Transverse colon (tissue), 4 donors: ENCODE measurements at regions of chr10 and their contacts with region 1.

Region 1: GRCh38 chr10:17200912-17201793 is at the start of gene TRDMT1:
- DNase-seq: peak; percentile 88
- H3K4me3 ChIP-seq: peak within 1 kb of the TSS; percentile 62 to 90 (median 72)
- H3K27ac ChIP-seq: peak within 1 kb of the TSS; percentile 90 to 95 (median 94)
- H3K4me1 ChIP-seq: peaks cover 0 to 24% (median 10%) of the 10 kb centered on the region in 4 donors
- H3K27me3 ChIP-seq: no peaks in the 10 kb centered on the region
- CTCF ChIP-seq: no peak
- EP300 ChIP-seq: no peak
- POLR2A ChIP-seq: peak; percentile 55
- total RNA-seq, gene TRDMT1: 3.7 to 9.7 (median 7.9) TPM

Region 2: GRCh38 chr10:17228091-17228940 is 27.2 kb after region 1 on chr10 and contains the start of gene VIM:
- in situ Hi-C with region 1: no loop called
- intact Hi-C with region 1: loop called (anchors 2 kb)
- DNase-seq: peak; percentile 81
- H3K4me3 ChIP-seq: peak within 1 kb of the TSS; percentile 54 to 69 (median 58)
- H3K27ac ChIP-seq: peak within 1 kb of the TSS; percentile 92 to 99 (median 96)
- H3K4me1 ChIP-seq: peaks cover 10 to 60% (median 33%) of the 10 kb centered on the region in 4 donors
- H3K27me3 ChIP-seq: peaks cover 21% of the 10 kb centered on the region
- CTCF ChIP-seq: no peak
- EP300 ChIP-seq: peak; percentile 14
- POLR2A ChIP-seq: peak; percentile 66
- total RNA-seq, gene VIM: 345 to 1,157 (median 686) TPM